Posterior vena cava (tissue), 2 donors: ENCODE measurements at regions of chr1 and their contacts with region 1.

Region 1: DNA sequence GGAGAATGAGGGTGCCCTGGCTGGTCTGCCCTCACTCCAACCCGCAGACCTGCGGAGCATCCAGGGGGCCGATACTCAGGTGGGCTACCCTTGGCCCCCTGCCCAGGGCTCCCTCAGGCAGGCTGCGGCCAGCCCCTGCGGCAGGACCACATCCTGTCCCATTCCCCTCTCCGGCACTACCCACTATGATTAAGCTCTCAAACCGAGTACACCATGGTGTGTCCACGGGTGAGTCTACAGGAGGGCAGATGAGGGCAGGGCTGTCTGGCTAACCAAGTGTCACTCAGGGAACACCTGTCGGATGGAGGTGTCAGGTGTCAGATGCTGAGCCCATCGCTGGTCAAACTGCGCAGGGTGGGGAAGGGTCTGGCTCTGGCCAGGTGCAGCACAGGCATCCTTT is 47.2 kb downstream of the SLC66A1 start:
- DNase-seq: no peak

Region 2: GRCh38 chr1:18972531-18972930 is 386.8 kb before region 1 on chr1:
- intact Hi-C with region 1: no loop called
- DNase-seq: peak; percentile 30

Region 3: GRCh38 chr1:19374083-19374801 is 14.9 kb after region 1 on chr1:
- intact Hi-C with region 1: no loop called
- DNase-seq: no peak

Region 4: GRCh38 chr1:19877821-19878636 is 518.7 kb after region 1 on chr1:
- intact Hi-C with region 1: loop called in 1 of 2 experiments (anchors 5 kb)
- DNase-seq: no peak